Panc1 (cell line): ENCODE measurements at regions of chr2 and their contacts with region 1.

Region 1: DNA sequence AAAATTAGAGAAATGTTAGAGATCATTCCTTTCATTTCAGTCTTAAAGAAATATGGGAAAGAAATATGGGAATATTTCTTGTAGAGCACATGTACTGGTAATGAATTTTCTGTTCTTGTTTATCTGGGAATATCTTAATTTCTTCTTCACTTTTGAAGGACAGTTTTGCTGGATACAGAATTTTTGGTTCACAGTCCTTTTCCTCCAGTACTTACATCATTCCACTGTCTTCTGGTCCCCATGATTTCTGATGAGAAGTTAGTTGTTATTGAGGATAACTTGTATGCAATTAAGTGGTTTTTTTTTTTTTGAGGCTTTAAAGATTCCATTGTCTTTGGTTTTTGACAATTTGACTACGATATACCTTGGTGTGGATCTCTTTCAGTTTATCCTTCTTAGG is 11.0 kb downstream of the NEURL3 start:
- DNase-seq: no peak
- ATAC-seq: no peak
- H3K4me3 ChIP-seq: no peak overlapping the region
- H3K27ac ChIP-seq: no peak overlapping the region
- H3K4me1 ChIP-seq: 0 out of 2 replicates have a peak, but pooled peaks cover 3% of the 10 kb centered on the region
- H3K27me3 ChIP-seq: no peaks in the 10 kb centered on the region
- CTCF ChIP-seq: no peak

Region 2: DNA sequence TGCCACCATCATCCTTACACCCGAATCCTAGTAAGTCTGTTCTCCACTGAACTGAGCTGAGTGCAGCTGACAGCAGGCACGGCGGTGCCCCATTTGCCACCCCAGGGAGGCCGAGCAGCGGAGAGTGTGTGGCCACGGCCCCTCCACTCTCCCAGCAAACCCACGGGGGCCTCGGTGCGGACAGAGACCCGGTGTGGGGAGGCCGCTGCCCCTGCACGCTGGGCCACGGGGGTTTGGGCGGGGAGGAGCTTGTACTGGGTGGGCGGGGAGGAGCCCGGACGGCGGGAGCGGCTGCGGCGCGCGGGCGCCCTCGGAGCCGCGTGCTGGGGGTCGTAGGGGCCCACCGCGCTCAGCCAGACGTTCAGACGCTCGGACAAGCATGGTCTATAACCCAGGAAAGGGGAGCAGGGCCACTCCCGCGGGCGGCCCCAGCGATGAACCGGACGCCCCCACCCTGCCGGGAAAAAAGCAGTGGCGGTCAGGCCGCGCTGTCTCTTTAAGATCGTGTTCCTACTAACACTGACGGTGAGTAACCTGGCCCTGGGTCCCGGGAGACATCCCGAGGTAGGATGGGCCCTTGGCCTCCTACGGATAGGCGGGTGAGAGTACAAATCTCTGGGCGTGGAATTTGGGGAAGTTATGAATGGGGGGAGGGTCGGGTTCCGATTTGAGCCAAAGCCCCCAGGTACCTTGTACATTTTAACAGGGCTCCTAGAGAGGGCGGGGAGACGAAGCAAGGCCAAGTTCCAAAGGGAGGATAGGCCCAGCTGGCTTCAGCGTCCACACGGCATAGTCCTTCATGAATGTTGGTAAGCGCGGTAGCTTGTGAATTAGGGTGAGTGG is 168.9 kb before region 1 on chr2 and contains the start of gene ITPRIPL1:
- CTCF ChIA-PET with region 1: no interaction called
- POLR2A ChIA-PET with region 1: interaction called, 11 read pairs
- in situ Hi-C with region 1: no loop called
- intact Hi-C with region 1: no loop called
- DNase-seq: no peak
- ATAC-seq: peak; percentile 67
- H3K4me3 ChIP-seq: peak within 1 kb of the TSS; percentile 69 to 84
- H3K27ac ChIP-seq: peak within 1 kb of the TSS; percentile 90
- H3K4me1 ChIP-seq: peaks cover 15% of the 10 kb centered on the region
- H3K27me3 ChIP-seq: no peaks in the 10 kb centered on the region
- CTCF ChIP-seq: no peak
- total RNA-seq, gene ITPRIPL1: 12.2 TPM

Region 3: DNA sequence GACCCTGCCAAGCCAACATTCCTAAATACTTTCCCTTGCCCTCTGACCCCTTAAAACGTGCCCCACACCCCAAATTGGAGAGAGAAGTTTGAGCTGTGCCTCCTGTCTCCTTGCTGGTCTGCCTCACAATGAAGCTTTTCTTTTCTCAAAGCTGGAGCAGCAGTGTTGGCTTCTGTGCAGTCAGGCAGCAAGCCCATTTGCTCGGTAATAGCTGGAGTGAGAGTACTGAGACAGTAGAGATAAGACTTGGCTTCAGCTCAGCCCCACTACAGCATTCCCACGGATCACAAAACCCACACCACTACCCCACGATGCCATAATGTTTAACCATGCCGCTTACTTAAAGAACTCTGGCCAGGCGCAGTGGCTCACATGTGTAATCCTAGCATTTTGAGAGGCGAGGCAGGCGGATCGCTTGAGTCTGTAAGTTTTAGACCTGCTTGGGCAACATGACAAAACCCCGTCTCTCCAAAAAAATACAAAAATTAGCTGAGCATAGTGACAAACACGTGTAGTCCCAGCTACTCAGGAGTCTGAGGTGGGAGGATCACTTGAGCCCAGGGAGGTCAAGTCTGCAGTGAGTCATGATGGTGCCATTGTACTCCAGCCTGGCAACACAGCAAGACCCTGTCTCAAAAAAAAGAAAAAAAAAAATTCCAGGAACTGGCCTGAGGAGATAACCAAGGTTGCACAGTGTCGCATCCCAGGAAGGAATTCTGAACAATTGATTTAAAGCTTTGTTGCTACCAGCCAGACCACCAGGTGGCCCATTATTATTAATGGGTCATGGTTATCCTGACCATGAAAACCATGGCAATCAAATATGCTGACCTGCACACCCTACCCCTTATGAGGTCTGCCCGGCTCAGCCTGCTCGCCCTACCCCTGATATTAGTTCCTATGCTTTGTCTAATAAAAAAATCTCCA is 85.3 kb before region 1 on chr2:
- CTCF ChIA-PET with region 1: no interaction called
- POLR2A ChIA-PET with region 1: no interaction called
- in situ Hi-C with region 1: no loop called
- intact Hi-C with region 1: no loop called
- DNase-seq: no peak
- ATAC-seq: peak; percentile 57
- H3K4me3 ChIP-seq: no peak overlapping the region
- H3K27ac ChIP-seq: peak overlapping the region; percentile 81
- H3K4me1 ChIP-seq: peaks cover 57% of the 10 kb centered on the region
- H3K27me3 ChIP-seq: no peaks in the 10 kb centered on the region
- CTCF ChIP-seq: peak; percentile 61